Head of caudate nucleus (tissue), 42 donors: ENCODE measurements at regions of chr11 and their contacts with region 1.

Region 1: GRCh38 chr11:65615229-65615941 is at the start of gene PCNX3:
- DNase-seq: peak; percentile 99 to 100 (median 100)

Region 2: DNA sequence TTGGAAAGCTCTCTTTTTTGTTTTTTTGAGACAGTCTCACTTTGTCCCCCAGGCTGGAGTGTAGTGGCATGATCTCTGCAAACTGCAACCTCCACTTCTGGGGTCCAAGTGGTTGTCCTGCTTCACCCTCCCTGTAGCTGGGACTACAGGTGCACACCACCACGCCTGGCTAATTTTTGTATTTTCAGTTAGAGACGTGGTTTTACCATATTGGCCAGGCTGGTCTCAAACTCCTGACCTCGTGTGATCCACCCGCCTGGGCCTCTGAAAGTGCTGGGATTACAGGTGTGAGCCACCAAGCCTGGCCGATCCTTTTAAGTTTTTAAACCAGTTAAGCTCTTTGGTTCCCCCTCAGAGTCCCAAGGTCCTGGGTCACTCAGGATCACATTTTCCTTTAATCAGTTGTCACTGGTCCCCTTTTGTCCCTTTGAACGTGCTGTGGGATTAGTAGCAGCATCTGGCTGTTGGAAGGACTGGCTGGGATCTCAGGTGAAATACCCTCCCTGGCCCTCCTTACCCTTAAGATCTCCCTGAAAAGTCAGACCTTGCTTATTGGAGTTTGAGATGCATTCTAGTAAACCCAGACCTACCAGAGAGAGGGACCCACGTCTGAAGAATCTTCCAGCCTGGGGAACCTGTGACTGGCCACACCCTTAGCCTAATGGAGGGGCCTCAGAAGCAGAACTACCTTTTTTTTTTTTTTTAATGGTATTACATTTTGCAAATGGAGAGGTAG is 108.4 kb before region 1 on chr11:
- intact Hi-C with region 1: no loop called
- DNase-seq: peak in 21 of 42 donors; percentile 30 to 87 (median 56)

Region 3: GRCh38 chr11:65569973-65570918 is 45.1 kb before region 1 on chr11 and contains the start of gene ZNRD2:
- intact Hi-C with region 1: loop called (anchors 2 kb)
- DNase-seq: peak; percentile 95 to 100 (median 99)

Region 4: GRCh38 chr11:65652511-65653231 is 37.3 kb after region 1 on chr11:
- intact Hi-C with region 1: loop called (anchors 5 kb)
- DNase-seq: peak; percentile 68 to 95 (median 88)

Region 5: GRCh38 chr11:65826962-65827735 is 211.8 kb after region 1 on chr11:
- intact Hi-C with region 1: no loop called
- DNase-seq: peak in 1 of 42 donors; percentile 3